Endothelial cell of umbilical vein (primary cell): ENCODE measurements at regions of chr16 and their contacts with region 1.

Region 1: DNA sequence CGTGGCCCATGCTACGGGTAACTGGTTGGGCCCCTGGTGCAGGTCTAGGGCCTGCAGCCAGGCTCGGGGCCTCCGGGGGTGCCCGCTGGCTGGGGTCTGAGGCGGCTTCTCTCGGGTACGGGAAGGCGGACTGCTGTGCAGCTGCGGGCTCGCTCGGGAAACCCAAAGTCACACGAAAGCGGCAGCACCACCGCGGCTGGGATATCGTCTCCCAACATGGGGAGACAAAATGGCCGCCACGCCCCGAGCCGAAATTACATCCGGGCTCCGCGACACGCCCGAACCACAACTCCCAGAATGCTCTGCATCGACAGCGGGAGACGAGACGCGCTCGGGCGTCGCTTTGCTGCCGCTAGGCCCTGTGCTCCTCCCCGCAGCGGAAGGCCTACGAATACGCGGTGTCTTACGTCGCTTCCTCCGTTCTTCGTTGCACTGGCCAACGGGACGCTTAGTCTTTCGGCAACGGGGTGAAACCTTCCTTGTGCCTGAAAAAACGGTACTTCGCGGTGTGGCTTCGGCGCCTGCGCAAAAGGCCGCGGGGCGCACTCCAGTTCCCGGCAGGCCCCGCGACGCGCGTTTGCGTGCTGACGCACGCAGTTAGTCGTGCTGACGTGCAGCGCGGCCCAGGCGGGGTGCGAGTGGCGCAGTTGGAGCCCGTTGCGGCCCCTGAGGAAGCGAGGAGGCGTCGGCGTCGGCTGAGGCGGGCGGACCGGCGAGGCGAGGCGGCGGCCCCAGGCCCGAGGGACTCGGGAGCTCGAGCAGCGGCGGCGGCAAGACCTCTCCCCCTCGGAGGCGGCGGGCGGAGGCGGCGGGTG is at the start of gene SRRM2:
- DNase-seq: peak; percentile 98
- H3K4me3 ChIP-seq: peak within 1 kb of the TSS; percentile 91 to 96 (median 93)
- H3K27ac ChIP-seq: peak within 1 kb of the TSS; percentile 65
- H3K4me1 ChIP-seq: peaks cover 26% of the 10 kb centered on the region
- H3K27me3 ChIP-seq: no peaks in the 10 kb centered on the region
- CTCF ChIP-seq: no peak
- POLR2A ChIP-seq: peak; percentile 81
- total RNA-seq, gene SRRM2: 483 and 492 TPM in 2 replicates

Region 2: DNA sequence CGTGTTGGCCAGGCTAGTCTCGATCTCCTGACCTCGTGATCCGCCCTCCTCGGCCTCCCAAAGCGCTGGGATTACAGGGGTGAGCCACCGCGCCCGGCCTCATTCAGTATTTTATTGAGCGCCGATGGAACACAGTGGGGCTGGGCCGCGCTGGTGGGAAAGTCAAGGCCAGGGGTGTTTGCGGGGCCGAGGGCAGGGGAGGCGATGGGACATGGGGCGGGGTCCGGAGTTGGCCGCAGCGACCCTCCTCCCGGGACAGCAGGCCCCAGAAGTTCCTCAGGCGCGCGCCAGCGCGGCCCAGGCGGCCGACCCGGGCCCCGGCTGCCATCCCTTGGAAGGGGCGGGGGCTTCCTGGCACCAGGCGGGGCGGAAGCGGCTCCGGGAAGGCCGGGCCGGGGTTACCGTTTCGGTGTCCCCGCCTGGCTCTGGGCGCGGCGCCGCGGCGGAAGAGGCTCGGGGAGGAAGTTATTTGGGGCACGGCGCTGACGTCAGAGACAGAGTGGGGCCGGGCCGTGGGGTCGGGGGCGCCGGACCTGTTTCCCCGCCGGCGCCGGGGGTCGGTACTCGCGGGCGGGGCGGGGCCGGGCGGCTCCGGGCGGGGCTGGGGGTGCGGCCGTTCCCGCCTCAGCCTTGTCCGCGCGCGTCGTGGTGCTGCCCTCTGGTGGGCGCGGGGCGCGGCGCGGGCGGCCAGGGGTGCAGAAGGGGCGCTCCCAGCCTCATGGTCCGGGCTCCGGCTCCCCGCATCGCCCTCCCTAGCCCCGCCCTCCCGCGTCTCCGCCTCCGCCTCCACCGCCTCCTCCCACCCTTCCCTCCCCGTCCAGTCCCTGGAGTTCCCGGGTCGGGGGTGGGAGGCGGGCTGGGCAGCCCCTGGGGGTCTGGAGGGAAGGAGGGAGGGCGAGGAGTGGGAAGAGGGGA is 31.3 kb before region 1 on chr16:
- CTCF ChIA-PET with region 1: no interaction called
- POLR2A ChIA-PET with region 1: no interaction called
- dilution Hi-C with region 1: no loop called
- intact Hi-C with region 1: loop called (anchors 1 kb)
- DNase-seq: peak; percentile 64
- H3K4me3 ChIP-seq: peak overlapping the region; percentile 38 to 62 (median 55)
- H3K27ac ChIP-seq: peak overlapping the region; percentile 41
- H3K4me1 ChIP-seq: peaks cover 4% of the 10 kb centered on the region
- H3K27me3 ChIP-seq: peaks cover 0 to 4% of the 10 kb centered on the region in 2 experiments
- CTCF ChIP-seq: peak; percentile 29 to 61
- POLR2A ChIP-seq: peak; percentile 53